Activated B cell treated with CpG ODN at 0.5 μM for 24 hours (primary cell): ENCODE measurements at regions of chr2 and their contacts with region 1.

Region 1: GRCh38 chr2:181672255-181673008 is 7.9 kb downstream of the NEUROD1 start:
- DNase-seq: no peak
- ATAC-seq: peak; percentile 66
- H3K4me3 Mint-ChIP-seq: no peak overlapping the region
- H3K27ac Mint-ChIP-seq: no peak overlapping the region
- H3K4me1 Mint-ChIP-seq: peaks cover 22% of the 10 kb centered on the region
- H3K27me3 Mint-ChIP-seq: peaks cover 14% of the 10 kb centered on the region
- CTCF ChIP-seq: no peak

Region 2: GRCh38 chr2:181586569-181587081 is 85.8 kb before region 1 on chr2:
- CTCF ChIA-PET with region 1: no interaction called
- POLR2A ChIA-PET with region 1: no interaction called
- intact Hi-C with region 1: loop called (anchors 2 kb)
- DNase-seq: no peak
- ATAC-seq: peak; percentile 86
- H3K4me3 Mint-ChIP-seq: peak overlapping the region; percentile 16
- H3K27ac Mint-ChIP-seq: peak overlapping the region; percentile 72
- H3K4me1 Mint-ChIP-seq: peaks cover 17% of the 10 kb centered on the region
- H3K27me3 Mint-ChIP-seq: peaks cover 13% of the 10 kb centered on the region
- CTCF ChIP-seq: no peak

Region 3: GRCh38 chr2:181656450-181657291 is 15.8 kb before region 1 on chr2 and contains the start of gene CERKL:
- CTCF ChIA-PET with region 1: no interaction called
- POLR2A ChIA-PET with region 1: no interaction called
- intact Hi-C with region 1: loop called (anchors 2 kb)
- DNase-seq: peak; percentile 25
- ATAC-seq: peak; percentile 80
- H3K4me3 Mint-ChIP-seq: peak within 1 kb of the TSS; percentile 84
- H3K27ac Mint-ChIP-seq: no peak within 1 kb of the TSS
- H3K4me1 Mint-ChIP-seq: peaks cover 13% of the 10 kb centered on the region
- H3K27me3 Mint-ChIP-seq: peaks cover 34% of the 10 kb centered on the region
- CTCF ChIP-seq: no peak
- total RNA-seq, gene CERKL: 0.18 and 0.20 TPM in 2 replicates

Region 4: DNA sequence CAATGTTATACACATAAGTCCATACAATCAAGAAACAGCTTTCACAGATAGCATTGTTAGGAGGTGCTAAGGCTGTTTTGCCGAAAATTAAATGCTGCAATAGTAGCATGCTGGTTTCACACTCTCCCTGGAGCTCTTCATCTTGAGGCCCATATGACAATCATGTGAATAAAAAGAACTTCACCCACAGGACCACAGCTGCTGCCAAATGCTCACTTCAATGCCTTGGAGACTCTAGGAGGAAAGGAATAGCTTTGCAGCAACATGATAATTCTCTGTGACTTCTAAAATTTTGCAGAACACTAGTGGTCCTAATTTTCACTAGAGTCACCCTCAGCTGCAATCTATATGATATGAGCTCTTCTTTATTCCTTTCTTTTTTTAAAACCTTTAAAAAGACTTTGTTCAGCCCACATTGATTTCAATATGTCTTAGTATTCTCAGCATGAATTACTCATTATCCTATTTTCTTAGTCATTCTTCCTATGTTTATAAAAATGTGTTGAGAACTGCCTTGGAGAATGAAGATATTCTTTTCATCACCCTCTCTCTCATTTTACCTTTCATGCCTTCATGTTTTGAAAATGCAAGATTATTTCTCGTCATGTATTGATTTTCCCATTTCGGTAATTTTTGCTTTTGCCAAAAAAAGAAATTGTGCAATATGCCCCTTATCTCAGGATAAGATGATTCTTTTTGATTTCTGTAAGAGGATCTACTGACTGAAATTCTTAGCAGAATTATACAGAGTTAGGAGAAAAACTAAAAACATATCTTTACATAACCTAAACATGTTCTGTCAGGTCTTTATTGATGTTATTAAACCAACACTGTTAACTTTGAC is 646.3 kb after region 1 on chr2:
- CTCF ChIA-PET with region 1: no interaction called
- POLR2A ChIA-PET with region 1: no interaction called
- intact Hi-C with region 1: no loop called
- DNase-seq: no peak
- ATAC-seq: no peak
- H3K4me3 Mint-ChIP-seq: no peak overlapping the region
- H3K27ac Mint-ChIP-seq: no peak overlapping the region
- H3K4me1 Mint-ChIP-seq: no peaks in the 10 kb centered on the region
- H3K27me3 Mint-ChIP-seq: no peaks in the 10 kb centered on the region
- CTCF ChIP-seq: no peak